ENCODE measurements at regions of chr11 and their contacts with region 1.

Region 1: GRCh38 chr11:34512840-34513681 is 533 bp downstream of the ELF5 start:
- DNase-seq: peak; percentile 29
- H3K4me3 ChIP-seq: no peak overlapping the region
- H3K27ac ChIP-seq: no peak overlapping the region
- H3K4me1 ChIP-seq: no peaks in the 10 kb centered on the region
- H3K27me3 ChIP-seq: no peaks in the 10 kb centered on the region
- CTCF ChIP-seq: peak; percentile 88 to 92

Region 2: GRCh38 chr11:34899633-34900016 is 386.6 kb after region 1 on chr11:
- CTCF ChIA-PET with region 1: no interaction called
- dilution Hi-C with region 1: no loop called
- in situ Hi-C with region 1: loop called (anchors 10 kb)
- intact Hi-C with region 1: loop called (anchors 2 kb)
- DNase-seq: no peak
- H3K4me3 ChIP-seq: no peak overlapping the region
- H3K27ac ChIP-seq: no peak overlapping the region
- H3K4me1 ChIP-seq: no peaks in the 10 kb centered on the region
- H3K27me3 ChIP-seq: no peaks in the 10 kb centered on the region
- CTCF ChIP-seq: no peak